GM12878 (cell line): ENCODE measurements at regions of chr12 and their contacts with region 1.

Region 1: GRCh38 chr12:111412007-111412829 is 6.5 kb downstream of the SH2B3 start:
- DNase-seq: no peak
- ATAC-seq: peak; percentile 43
- H3K4me3 ChIP-seq: peak overlapping the region; percentile 58; the same call in 1 of the 2 replicates
- H3K27ac ChIP-seq: peak overlapping the region; percentile 49
- H3K4me1 ChIP-seq: peaks cover 49% of the 10 kb centered on the region
- H3K27me3 ChIP-seq: no peaks in the 10 kb centered on the region
- CTCF ChIP-seq: no peak
- EP300 ChIP-seq: no peak
- POLR2A ChIP-seq: no peak
- RAD21 ChIP-seq: no peak

Region 2: DNA sequence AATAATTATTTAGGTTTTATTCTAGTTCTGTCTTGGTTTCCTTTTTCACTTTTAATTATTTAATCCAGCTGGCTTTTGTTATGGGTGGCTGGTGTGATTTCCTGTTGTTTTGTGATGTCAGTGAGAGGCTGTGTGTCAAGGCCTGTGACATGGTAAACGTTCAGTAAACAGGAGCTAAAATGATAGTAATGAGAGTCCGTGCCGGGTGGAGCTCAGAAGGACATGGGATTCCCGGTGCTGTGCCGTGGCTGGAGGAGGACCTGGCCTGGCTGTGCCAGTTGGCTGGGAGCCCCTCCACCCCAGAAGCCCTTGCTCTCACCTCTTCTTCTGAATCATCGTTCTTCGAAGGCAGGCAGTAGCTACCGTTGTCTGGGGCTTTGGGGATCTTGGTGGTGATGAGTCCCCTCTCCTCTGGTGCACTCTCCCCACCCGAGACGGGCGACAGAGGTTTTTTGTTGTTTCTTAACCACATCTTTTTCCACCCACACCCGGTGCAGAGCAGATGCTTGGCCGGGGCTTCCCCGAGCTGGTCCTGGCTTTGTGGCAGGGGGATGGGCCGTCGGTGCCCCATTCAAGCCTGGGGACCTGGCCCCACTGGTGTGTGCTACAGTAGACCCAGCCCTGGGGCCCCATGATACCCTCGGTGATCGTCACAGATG is 22.6 kb after region 1 on chr12:
- CTCF ChIA-PET with region 1: interaction called, 1,117 read pairs
- POLR2A ChIA-PET with region 1: interaction called, 188 read pairs
- RAD21 ChIA-PET with region 1: interaction called, 804 read pairs
- SMC1A ChIA-PET with region 1: interaction called, 57 read pairs
- in situ Hi-C with region 1: no loop called
- intact Hi-C with region 1: no loop called
- DNase-seq: peak; percentile 84
- ATAC-seq: peak; percentile 72
- H3K4me3 ChIP-seq: peak overlapping the region; percentile 65
- H3K27ac ChIP-seq: peak overlapping the region; percentile 95
- H3K4me1 ChIP-seq: peaks cover 91% of the 10 kb centered on the region
- H3K27me3 ChIP-seq: no peaks in the 10 kb centered on the region
- CTCF ChIP-seq: no peak
- EP300 ChIP-seq: peak; percentile 47 to 60; a peak in 3 of 4 replicates
- POLR2A ChIP-seq: peak; percentile 67
- RAD21 ChIP-seq: no peak